HepG2 (cell line): ENCODE measurements at regions of chr6 and their contacts with region 1.

Region 1: DNA sequence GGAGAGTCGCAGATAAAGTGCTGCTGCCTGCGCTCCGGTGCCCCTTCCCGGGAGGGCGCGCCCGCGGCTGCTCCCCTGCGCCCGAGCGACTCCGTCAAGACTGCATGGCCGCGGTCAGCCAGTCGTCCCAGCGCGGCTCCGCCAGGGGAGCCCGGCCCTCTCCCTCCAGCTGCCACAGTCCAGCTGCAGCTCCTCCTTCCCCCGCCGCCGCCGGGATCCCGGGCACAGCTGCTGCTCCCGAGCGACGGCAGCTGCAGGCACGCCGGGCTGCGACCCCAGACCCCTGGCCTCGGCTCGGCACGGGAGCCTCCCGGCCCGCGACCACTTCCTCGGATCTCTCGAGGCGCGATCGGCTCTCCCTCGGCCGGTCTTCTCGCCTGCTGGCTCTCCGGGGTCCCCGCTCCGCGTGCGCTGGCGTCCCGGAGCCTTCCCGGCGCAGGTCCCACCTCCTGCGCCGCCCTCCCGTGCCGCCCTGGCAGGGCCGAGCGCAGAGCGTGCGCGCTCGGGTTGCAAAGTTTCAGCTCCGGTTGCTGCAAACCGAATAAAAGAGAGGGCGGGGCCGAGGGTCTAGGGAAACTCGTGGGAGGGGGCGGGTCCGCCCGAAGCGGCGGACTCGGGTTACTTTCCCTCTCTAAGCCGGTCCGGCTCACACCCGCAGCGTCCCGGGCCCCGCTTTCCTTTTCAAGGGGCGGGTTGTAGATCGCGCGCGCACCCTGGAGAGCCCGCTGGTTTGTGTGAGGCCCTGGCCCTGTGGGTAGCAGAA is at the start of gene CNKSR3:
- DNase-seq: peak; percentile 95
- ATAC-seq: peak; percentile 87
- H3K4me3 ChIP-seq: peak within 1 kb of the TSS; percentile 96 to 99 (median 98)
- H3K27ac ChIP-seq: peak within 1 kb of the TSS; percentile 94
- H3K4me1 ChIP-seq: peaks cover 43% of the 10 kb centered on the region
- H3K27me3 ChIP-seq: no peaks in the 10 kb centered on the region; a peak in 1 of 5 replicates
- CTCF ChIP-seq: peak; percentile 50
- EP300 ChIP-seq: peak in 1 of 2 experiments; percentile 53; a peak in 2 of 4 replicates
- POLR2A ChIP-seq: peak; percentile 89
- RAD21 ChIP-seq: peak; percentile 73
- total RNA-seq, gene CNKSR3: 38.3 and 38.6 TPM in 2 replicates

Region 2: DNA sequence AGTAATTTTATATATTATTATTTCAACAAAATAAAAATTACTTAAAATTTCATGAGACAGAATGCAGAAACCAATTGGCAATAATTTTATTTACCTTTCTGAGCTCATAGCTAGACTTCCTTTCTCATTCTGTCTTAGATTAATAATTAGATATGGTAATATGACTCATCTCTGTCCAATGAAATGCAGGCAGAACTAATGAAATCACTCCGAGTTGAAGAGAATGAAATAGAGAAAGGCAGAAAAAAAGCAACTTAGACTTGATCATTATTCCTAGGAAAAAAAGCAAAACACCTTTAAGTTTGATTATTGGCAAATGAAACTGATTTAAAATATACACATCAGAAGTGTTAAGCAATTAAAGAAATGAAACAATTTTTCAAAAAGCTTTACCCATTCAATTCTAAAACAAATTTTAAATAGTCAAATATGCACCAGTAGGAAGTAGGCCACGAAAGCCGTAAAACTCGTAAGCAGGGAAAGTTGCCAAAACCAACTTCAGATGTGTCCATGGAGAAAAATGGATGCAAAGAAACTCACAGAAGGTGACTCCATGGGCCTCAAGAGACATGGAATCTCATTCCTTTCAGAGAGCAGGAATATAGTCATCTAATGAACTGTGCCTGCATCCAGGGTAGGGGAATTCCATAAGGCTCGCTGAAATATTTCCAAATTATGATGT is 1085.5 kb before region 1 on chr6:
- CTCF ChIA-PET with region 1: no interaction called
- POLR2A ChIA-PET with region 1: no interaction called
- in situ Hi-C with region 1: no loop called
- intact Hi-C with region 1: no loop called
- DNase-seq: no peak
- ATAC-seq: no peak
- H3K4me3 ChIP-seq: no peak overlapping the region
- H3K27ac ChIP-seq: no peak overlapping the region
- H3K4me1 ChIP-seq: no peaks in the 10 kb centered on the region
- H3K27me3 ChIP-seq: no peaks in the 10 kb centered on the region
- CTCF ChIP-seq: no peak
- EP300 ChIP-seq: no peak
- POLR2A ChIP-seq: no peak
- RAD21 ChIP-seq: no peak

Region 3: DNA sequence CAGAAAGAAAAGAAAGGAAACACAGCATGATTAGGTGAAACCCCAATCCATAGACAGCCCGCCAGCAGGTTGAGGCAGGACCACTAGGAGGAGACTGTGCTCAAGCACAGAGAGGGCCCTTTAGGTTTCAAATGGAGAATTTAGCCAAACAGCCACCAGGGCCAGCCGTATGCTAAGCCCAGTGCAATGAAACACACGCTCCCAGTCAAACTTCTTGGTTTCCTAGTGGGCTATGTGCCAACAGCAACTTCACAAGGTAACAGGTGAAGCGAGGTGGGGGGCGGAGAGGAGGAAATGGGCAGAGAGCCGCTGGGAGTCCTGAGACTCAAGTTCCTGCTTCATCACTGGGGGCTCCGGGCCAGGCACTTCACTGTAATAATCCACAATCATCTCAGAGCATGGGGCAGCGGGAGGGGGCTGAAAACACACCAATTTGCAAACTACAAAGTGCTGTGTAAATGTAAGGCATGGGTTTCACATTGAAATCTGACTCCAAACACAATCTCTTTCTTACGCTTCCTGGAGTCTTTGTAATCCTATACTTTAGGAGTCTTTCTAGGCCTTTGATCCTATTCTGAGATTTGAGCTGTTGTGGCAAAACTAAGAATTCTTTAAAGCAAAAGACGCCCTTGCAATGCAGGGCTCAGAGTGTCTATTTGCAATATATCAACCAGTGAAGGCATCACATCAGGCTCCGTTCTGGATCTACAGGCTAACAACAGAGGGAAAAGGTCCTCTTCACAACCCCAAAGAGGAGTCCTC is 354.0 kb before region 1 on chr6:
- CTCF ChIA-PET with region 1: no interaction called
- POLR2A ChIA-PET with region 1: no interaction called
- in situ Hi-C with region 1: loop called (anchors 25 kb)
- intact Hi-C with region 1: no loop called
- DNase-seq: peak; percentile 30
- ATAC-seq: peak; percentile 99
- H3K4me3 ChIP-seq: no peak overlapping the region
- H3K27ac ChIP-seq: no peak overlapping the region
- H3K4me1 ChIP-seq: no peaks in the 10 kb centered on the region
- H3K27me3 ChIP-seq: no peaks in the 10 kb centered on the region; a peak in 2 of 5 replicates
- CTCF ChIP-seq: peak; percentile 63
- EP300 ChIP-seq: no peak
- POLR2A ChIP-seq: no peak
- RAD21 ChIP-seq: no peak

Region 4: DNA sequence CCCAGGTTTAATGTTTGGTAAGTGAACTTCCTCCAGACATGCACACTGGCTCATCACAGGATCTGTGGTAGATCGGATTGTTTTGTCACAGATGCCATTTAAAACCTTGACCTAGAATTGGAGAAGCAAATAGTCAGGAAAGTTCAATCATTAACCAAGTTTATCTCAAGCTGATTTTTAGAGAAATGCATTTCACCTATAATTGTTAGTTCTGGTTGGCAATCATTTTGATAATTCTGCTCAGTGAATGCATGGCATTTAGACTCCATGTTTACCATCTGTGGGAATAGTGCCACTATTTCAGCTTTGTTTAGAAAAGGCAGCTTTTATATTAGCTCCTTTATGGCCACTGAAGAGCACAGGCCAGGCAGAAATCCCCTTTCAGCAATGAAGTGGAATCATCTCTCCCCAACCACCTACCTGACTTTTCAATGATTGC is 79.8 kb before region 1 on chr6:
- CTCF ChIA-PET with region 1: no interaction called
- POLR2A ChIA-PET with region 1: interaction called, 20 read pairs
- in situ Hi-C with region 1: no loop called
- intact Hi-C with region 1: loop called (anchors 1 kb)
- DNase-seq: peak; percentile 90
- ATAC-seq: peak; percentile 93
- H3K4me3 ChIP-seq: peak overlapping the region in 1 of 3 experiments; percentile 19; a peak in 1 of 6 replicates
- H3K27ac ChIP-seq: peak overlapping the region; percentile 75
- H3K4me1 ChIP-seq: peaks cover 51% of the 10 kb centered on the region
- H3K27me3 ChIP-seq: no peaks in the 10 kb centered on the region
- CTCF ChIP-seq: no peak
- EP300 ChIP-seq: peak in 1 of 2 experiments; percentile 68; a peak in 2 of 4 replicates
- POLR2A ChIP-seq: no peak
- RAD21 ChIP-seq: no peak

Region 5: GRCh38 chr6:154460306-154461071 is 49.8 kb before region 1 on chr6:
- CTCF ChIA-PET with region 1: no interaction called
- POLR2A ChIA-PET with region 1: interaction called, 48 read pairs
- in situ Hi-C with region 1: no loop called
- intact Hi-C with region 1: loop called (anchors 1 kb)
- DNase-seq: peak; percentile 95
- ATAC-seq: peak; percentile 92
- H3K4me3 ChIP-seq: peak overlapping the region; percentile 22 to 59 (median 34); a peak in 5 of 6 replicates
- H3K27ac ChIP-seq: peak overlapping the region; percentile 81
- H3K4me1 ChIP-seq: peaks cover 72% of the 10 kb centered on the region
- H3K27me3 ChIP-seq: no peaks in the 10 kb centered on the region
- CTCF ChIP-seq: no peak
- EP300 ChIP-seq: peak in 1 of 2 experiments; percentile 93; a peak in 2 of 4 replicates
- POLR2A ChIP-seq: peak in 1 of 2 experiments; percentile 23; a peak in 1 of 4 replicates
- RAD21 ChIP-seq: peak; percentile 21

Region 6: DNA sequence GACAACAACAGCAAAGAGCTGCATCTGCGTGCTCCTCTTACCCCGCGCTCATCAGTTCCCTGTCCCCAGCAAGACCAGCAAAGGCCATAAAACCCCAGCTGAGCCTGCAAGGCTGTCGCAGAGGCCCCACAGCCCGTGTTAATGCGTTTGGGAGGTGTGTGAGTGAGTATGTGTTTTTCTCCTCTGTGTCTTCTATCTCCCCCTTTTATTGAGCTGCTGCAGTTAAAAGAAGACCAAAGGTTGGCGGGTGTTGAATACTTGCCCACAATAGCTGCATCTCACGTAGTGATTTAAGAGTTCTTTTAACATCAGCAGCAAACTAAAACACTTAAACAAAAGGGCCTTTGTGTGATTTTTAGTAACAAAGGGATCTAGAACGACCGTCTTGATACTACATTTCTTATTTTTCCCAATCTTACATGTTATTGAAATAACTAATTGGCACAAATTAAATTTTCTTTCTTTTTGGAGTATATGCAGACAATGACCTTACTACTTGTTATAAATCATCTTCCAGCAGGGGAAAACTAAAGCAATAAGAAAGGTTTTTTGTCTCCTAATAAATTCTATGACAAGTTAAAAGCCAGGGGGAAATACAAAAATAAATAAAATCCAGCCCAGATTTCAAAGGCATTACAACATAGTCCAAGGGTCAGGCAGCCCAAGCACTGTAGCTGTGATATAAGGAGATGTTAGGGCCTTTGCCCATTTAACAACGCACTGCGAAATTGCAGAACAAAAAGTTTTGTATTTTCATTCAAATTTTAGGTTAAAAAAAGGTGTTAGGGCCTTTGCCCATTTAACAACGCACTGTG is 27.4 kb after region 1 on chr6:
- CTCF ChIA-PET with region 1: no interaction called
- POLR2A ChIA-PET with region 1: interaction called, 28 read pairs
- in situ Hi-C with region 1: no loop called
- intact Hi-C with region 1: no loop called
- DNase-seq: peak; percentile 58
- ATAC-seq: peak; percentile 83
- H3K4me3 ChIP-seq: peak overlapping the region; percentile 30 to 56 (median 37)
- H3K27ac ChIP-seq: no peak overlapping the region
- H3K4me1 ChIP-seq: peaks cover 24% of the 10 kb centered on the region
- H3K27me3 ChIP-seq: no peaks in the 10 kb centered on the region; a peak in 1 of 5 replicates
- CTCF ChIP-seq: no peak
- EP300 ChIP-seq: peak in 1 of 2 experiments; percentile 14; a peak in 1 of 4 replicates
- POLR2A ChIP-seq: no peak
- RAD21 ChIP-seq: no peak

Region 7: DNA sequence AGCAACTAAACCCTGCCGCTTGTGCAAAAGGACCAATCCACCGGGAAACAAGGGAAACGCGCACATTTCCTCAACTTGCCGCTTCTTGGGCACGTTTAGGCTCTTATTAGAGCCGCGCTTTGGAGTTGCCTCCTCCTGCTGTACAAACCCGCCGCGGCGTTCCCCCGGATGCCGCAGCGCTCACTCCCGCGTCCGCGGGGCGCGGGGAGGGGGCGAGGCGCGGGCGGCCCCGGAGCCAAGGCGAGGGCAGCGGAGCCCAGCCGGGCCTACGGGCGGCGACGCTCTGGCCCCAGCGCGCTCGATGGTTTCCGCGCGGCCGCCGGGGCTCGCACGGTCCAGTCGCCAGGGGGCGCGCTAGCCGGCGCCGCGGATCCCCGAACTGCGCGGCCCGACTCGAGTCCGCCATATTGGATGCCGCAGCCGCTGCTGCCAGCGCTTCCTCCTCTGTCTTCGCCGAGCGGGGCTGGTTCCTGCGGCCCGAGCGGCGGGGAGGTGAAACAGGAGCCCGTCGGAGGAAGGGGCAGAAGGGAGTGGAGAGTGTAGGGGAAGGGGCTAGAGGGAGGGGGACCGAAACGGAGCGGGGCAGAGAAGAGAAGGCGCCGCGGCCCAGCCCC is 222.8 kb after region 1 on chr6 and contains the start of gene SCAF8:
- CTCF ChIA-PET with region 1: no interaction called
- POLR2A ChIA-PET with region 1: interaction called, 4 read pairs
- in situ Hi-C with region 1: no loop called
- intact Hi-C with region 1: loop called (anchors 5 kb)
- DNase-seq: peak; percentile 73
- ATAC-seq: peak; percentile 85
- H3K4me3 ChIP-seq: peak within 1 kb of the TSS; percentile 75 to 96 (median 81)
- H3K27ac ChIP-seq: peak within 1 kb of the TSS; percentile 99
- H3K4me1 ChIP-seq: peaks cover 48% of the 10 kb centered on the region
- H3K27me3 ChIP-seq: no peaks in the 10 kb centered on the region; a peak in 2 of 5 replicates
- CTCF ChIP-seq: peak; percentile 86
- EP300 ChIP-seq: peak in 1 of 2 experiments; percentile 52; a peak in 3 of 4 replicates
- POLR2A ChIP-seq: peak; percentile 75 to 89
- RAD21 ChIP-seq: peak; percentile 88
- total RNA-seq, gene SCAF8: 40.8 and 47.3 TPM in 2 replicates